WTC11 (cell line): ENCODE measurements at regions of chr10 and their contacts with region 1.

Region 1: DNA sequence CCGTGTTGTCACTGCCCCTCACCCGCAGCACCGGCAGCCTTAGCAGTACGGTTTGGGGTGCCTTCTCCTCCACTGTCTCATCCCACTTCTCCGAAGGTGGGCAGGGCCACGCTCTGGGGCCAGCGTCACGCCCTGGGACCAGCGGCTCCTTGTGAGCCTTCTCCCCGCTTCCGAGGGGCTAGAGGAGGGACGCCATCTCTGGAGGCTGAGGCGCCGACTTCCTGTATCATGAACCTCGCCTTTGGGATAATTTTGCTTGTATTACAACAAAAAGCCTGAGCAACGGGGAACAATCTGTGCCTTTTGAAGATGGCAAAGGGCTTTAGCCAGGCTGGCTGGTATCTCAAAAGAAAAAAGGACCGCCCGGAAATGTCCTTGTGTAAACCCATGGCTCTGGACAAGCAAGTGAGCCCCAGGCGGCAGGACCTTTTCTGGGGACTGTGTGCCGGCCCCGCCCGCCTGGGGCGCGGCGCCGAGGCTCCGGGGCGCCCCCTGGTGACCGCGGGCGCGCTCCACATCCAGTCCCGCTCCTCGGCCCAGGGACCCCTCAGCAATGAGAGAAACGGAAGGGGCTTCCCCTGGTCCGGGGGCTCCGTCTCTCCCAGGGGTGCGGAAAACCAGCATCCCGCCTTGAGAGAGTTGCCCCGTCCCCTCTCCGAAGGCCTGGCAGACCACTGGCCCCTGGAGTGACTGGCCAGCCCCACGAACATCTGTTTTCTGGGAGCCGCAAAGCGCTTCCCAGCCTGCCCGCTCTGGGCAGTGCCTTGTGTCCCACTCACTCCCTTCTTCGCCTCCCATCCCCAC is 3.8 kb downstream of the DEPP1 start:
- DNase-seq: peak; percentile 57
- ATAC-seq: peak; percentile 66
- H3K4me3 Mint-ChIP-seq: peak overlapping the region; percentile 61
- H3K27ac Mint-ChIP-seq: no peak overlapping the region
- H3K4me1 Mint-ChIP-seq: peaks cover 57% of the 10 kb centered on the region
- H3K27me3 Mint-ChIP-seq: peaks cover 12% of the 10 kb centered on the region
- CTCF ChIP-seq: peak; percentile 87

Region 2: GRCh38 chr10:44878706-44879530 is 95.9 kb before region 1 on chr10:
- CTCF ChIA-PET with region 1: interaction called, 10 read pairs
- POLR2A ChIA-PET with region 1: no interaction called
- DNase-seq: peak; percentile 91
- ATAC-seq: peak; percentile 93
- H3K4me3 Mint-ChIP-seq: peak overlapping the region; percentile 72
- H3K27ac Mint-ChIP-seq: peak overlapping the region; percentile 94; the same call in 1 of the 2 replicates
- H3K4me1 Mint-ChIP-seq: peaks cover 26% of the 10 kb centered on the region
- H3K27me3 Mint-ChIP-seq: peaks cover 23% of the 10 kb centered on the region
- CTCF ChIP-seq: no peak

Region 3: DNA sequence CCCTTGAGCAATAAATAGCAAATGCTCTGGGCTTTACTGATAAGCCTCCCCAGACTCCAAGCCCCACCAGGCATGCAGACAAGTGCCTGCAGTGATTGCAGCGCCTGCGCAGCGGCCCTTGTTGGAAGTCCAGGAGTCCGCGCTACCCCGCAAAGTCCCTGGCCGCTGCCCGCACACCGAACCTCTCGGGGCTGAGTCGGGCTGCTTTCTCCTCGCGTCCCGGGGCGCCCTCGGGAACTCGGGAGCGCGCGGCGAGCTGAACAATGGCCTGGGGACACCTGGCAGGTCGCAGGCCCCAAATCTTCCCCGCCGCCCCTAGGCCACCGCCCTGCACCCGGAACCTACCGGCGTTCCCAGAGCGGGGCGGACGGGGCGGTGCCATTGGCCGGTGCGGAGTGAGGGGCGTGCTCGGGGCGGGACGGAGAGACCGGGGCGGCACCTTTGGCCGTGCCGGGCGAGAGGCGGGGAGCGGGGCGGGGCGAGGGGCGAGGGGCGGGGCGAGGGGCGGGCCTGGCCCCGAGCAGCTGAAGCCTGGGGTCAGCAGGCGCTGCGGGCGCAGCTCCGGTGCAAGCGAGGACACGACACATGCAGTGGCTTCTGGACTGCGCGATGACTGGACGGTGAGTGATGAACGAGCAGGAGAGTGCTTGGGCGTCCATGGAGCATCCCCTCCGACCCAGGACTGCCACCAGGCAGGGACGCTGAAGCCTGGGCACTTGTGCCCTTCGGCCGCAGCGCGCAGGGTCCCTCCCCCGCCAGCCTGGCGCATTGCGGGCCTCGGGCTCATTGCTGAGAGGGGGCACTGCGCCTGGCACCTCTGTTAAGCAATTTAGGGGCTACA is 15.4 kb before region 1 on chr10 and contains the start of gene RASSF4:
- CTCF ChIA-PET with region 1: interaction called, 24 read pairs
- POLR2A ChIA-PET with region 1: interaction called, 5 read pairs
- DNase-seq: peak; percentile 94
- ATAC-seq: peak; percentile 97
- H3K4me3 Mint-ChIP-seq: peak within 1 kb of the TSS; percentile 81
- H3K27ac Mint-ChIP-seq: no peak within 1 kb of the TSS; the same call in 1 of the 2 replicates
- H3K4me1 Mint-ChIP-seq: peaks cover 56% of the 10 kb centered on the region
- H3K27me3 Mint-ChIP-seq: peaks cover 10% of the 10 kb centered on the region
- CTCF ChIP-seq: no peak
- total RNA-seq, gene RASSF4: 15.7 to 16.7 TPM (median 16.2 TPM) in 3 replicates